Psoas muscle (tissue), 8 donors: ENCODE measurements at regions of chr5 and their contacts with region 1.

Region 1: GRCh38 chr5:39217365-39218281 is 1.7 kb downstream of the FYB1 start:
- DNase-seq: peak; percentile 72 to 83
- ATAC-seq: peak; percentile 87 to 92 (median 91)
- H3K4me3 ChIP-seq: peak overlapping the region; percentile 54
- H3K27ac ChIP-seq: peak overlapping the region; percentile 82
- H3K4me1 ChIP-seq: peaks cover 22% of the 10 kb centered on the region
- H3K27me3 ChIP-seq: no peaks in the 10 kb centered on the region
- CTCF ChIP-seq: peak; percentile 98

Region 2: DNA sequence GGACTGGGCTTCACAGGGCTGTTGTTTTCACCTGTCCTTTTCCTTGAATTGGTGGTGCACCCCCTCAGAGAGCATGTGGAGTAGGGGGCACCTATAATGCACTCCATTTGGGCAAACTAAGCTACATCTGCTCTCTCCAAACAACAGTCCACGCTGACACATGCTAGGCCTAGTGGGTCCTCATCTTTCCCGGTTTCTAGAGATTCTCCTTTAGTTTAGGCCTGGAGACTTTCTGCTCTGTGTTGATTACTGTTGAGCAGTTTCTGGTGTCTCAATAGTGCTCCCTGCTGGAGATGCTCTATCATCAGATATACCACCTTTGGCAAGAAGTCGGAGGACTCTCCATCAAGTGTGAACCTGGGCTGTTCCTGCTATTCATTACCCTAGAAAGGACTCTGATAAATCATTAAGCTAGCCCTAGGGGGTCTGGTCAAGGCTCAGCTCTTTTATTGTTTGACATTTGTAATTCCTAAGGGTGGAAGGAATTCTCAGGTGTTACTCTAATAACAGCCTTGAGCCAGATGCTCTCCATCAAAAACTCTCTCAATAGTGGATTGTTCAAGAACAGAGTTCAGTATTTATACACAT is 65.7 kb after region 1 on chr5:
- intact Hi-C with region 1: loop called (anchors 1 to 2 kb)
- DNase-seq: no peak
- ATAC-seq: peak; percentile 65 to 94 (median 82)
- H3K4me3 ChIP-seq: no peak overlapping the region
- H3K27ac ChIP-seq: no peak overlapping the region
- H3K4me1 ChIP-seq: peaks cover 5% of the 10 kb centered on the region
- H3K27me3 ChIP-seq: peaks cover 0 to 2% (median 0%) of the 10 kb centered on the region in 3 donors
- CTCF ChIP-seq: peak; percentile 66

Region 3: DNA sequence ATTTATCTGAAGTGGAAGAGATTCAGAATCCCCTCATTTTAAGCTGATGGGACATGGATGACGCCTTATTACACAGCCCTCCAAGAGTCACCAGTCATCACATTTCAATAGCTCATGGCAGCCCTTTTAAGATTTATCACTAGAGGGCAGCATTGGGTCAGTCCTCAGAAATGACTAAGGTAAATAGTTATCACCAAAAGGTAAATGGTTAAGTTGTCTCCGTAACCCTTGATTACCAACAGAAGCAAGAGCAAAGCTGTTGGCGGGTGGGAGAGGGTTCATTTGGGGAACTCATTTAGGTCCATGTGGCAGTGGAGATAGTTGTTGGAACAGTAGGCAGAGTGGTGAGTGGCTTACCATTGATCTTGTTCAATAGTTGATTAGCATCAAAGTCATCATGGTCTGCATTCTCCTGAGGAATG is 158.7 kb after region 1 on chr5:
- intact Hi-C with region 1: no loop called
- DNase-seq: no peak
- ATAC-seq: peak; percentile 62 to 87 (median 74)
- H3K4me3 ChIP-seq: no peak overlapping the region
- H3K27ac ChIP-seq: no peak overlapping the region
- H3K4me1 ChIP-seq: no peaks in the 10 kb centered on the region
- H3K27me3 ChIP-seq: no peaks in the 10 kb centered on the region
- CTCF ChIP-seq: peak; percentile 69

Region 4: DNA sequence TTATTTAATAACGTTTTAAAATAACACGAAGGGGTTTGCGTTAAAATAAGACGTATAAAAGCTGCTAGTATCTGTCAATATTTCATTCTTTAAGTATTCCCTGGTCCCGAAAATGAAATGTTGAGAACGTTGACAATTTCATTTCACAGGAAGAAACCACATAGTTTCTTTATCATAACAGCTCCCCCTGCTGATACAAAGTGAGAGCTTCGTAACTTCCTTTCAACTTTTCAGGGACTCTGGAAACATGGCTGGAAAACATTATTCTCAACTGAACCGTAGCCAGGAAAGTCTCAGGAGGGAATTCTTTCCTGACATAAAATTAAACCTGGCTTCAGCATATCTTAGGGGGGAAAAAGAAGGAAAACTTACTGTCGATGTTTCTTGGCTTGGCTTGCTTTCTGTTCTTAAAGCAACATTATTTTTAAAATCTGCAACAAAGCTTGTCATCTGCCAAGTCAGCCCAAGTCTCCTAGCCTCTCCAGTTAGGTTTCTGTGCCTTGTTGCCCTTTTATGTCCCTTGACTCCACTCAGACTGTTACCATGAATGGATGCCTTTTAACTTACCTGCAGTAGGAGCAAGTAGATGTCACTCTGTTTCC is 330.0 kb after region 1 on chr5:
- intact Hi-C with region 1: loop called (anchors 5 kb)
- DNase-seq: no peak
- ATAC-seq: peak in 3 of 4 donors; percentile 40 to 74 (median 44)
- H3K4me3 ChIP-seq: no peak overlapping the region
- H3K27ac ChIP-seq: no peak overlapping the region
- H3K4me1 ChIP-seq: no peaks in the 10 kb centered on the region
- H3K27me3 ChIP-seq: no peaks in the 10 kb centered on the region
- CTCF ChIP-seq: peak; percentile 76

Region 5: DNA sequence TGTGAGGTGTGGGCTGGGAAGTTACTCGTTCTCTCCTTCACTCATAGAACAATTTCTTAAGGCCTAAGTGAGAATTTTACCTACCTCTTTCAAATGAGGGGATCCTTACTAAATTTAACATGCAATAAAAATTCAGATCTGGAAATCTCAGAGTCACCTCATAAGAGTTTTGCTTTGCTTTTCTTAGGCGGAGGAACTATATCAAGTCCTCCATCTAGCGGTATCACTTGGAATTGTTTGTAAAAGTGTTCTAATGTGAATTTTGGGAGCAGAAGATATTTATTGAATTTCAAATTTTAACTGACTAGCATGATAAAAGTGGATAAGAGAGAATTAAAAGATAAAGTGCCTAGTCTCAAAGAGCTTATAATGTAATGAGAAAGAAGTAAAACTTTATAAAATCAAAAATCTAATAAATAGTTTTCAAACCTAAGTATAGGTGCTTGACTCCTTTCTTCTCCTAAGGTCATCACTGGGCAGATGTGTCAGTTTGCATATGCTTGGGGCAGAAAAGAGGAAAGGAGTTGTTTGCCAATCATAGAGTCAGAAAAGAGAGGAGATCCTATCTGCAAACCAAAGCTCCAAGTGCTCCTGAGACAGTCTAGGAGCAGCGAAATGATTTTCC is 352.9 kb after region 1 on chr5:
- intact Hi-C with region 1: loop called (anchors 2 to 10 kb)
- DNase-seq: no peak
- ATAC-seq: peak in 1 of 4 donors; percentile 57
- H3K4me3 ChIP-seq: no peak overlapping the region
- H3K27ac ChIP-seq: no peak overlapping the region
- H3K4me1 ChIP-seq: no peaks in the 10 kb centered on the region
- H3K27me3 ChIP-seq: no peaks in the 10 kb centered on the region
- CTCF ChIP-seq: peak; percentile 72